OCI-LY7 (cell line): ENCODE measurements at regions of chr6 and their contacts with region 1.

Region 1: GRCh38 chr6:156699017-156699421 is 78.2 kb upstream of the ARID1B start:
- DNase-seq: no peak
- H3K4me3 ChIP-seq: peak overlapping the region; percentile 43
- H3K27ac ChIP-seq: peak overlapping the region; percentile 98
- H3K4me1 ChIP-seq: peaks cover 87% of the 10 kb centered on the region
- CTCF ChIP-seq: no peak

Region 2: GRCh38 chr6:155314092-155314772 is 1384.8 kb before region 1 on chr6 and contains the start of gene TFB1M:
- CTCF ChIA-PET with region 1: no interaction called
- POLR2A ChIA-PET with region 1: no interaction called
- intact Hi-C with region 1: loop called (anchors 10 kb)
- DNase-seq: peak; percentile 99
- H3K4me3 ChIP-seq: peak within 1 kb of the TSS; percentile 85
- H3K27ac ChIP-seq: peak within 1 kb of the TSS; percentile 89
- H3K4me1 ChIP-seq: peaks cover 28% of the 10 kb centered on the region
- CTCF ChIP-seq: no peak
- total RNA-seq, gene TFB1M: 33.0 and 34.8 TPM in 2 replicates

Region 3: DNA sequence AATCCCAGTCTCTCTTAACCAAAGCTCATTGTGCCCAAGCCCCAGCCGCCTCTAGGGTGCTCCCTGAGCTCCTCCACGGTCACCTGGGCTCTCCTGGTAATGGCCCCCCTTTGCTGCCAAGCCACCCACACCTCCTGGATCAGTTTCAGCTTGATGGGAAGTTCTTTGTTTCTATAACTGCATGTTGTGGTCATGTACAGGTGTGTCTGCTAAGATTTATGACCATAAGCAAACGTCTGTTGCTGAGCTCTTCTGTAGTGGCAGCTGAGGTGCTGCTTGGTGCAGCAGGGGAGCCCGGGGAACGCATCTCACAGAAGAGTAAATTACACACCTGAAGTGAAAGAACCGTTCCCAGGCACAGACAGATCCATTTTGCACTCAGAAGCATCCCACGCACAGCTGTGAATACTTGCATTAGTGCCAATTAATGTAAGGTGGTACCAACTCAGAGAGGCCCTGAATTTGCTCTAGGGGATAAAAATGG is 116.5 kb before region 1 on chr6:
- CTCF ChIA-PET with region 1: no interaction called
- POLR2A ChIA-PET with region 1: interaction called, 3 read pairs
- intact Hi-C with region 1: loop called (anchors 1 kb)
- DNase-seq: peak; percentile 89
- H3K4me3 ChIP-seq: peak overlapping the region; percentile 33
- H3K27ac ChIP-seq: peak overlapping the region; percentile 84
- H3K4me1 ChIP-seq: peaks cover 23% of the 10 kb centered on the region
- CTCF ChIP-seq: peak; percentile 59

Region 4: GRCh38 chr6:156686995-156687788 is 11.8 kb before region 1 on chr6:
- CTCF ChIA-PET with region 1: no interaction called
- POLR2A ChIA-PET with region 1: interaction called, 34 read pairs
- intact Hi-C with region 1: no loop called
- DNase-seq: peak; percentile 89
- H3K4me3 ChIP-seq: peak overlapping the region; percentile 73
- H3K27ac ChIP-seq: peak overlapping the region; percentile 92
- H3K4me1 ChIP-seq: peaks cover 57% of the 10 kb centered on the region
- CTCF ChIP-seq: no peak

Region 5: DNA sequence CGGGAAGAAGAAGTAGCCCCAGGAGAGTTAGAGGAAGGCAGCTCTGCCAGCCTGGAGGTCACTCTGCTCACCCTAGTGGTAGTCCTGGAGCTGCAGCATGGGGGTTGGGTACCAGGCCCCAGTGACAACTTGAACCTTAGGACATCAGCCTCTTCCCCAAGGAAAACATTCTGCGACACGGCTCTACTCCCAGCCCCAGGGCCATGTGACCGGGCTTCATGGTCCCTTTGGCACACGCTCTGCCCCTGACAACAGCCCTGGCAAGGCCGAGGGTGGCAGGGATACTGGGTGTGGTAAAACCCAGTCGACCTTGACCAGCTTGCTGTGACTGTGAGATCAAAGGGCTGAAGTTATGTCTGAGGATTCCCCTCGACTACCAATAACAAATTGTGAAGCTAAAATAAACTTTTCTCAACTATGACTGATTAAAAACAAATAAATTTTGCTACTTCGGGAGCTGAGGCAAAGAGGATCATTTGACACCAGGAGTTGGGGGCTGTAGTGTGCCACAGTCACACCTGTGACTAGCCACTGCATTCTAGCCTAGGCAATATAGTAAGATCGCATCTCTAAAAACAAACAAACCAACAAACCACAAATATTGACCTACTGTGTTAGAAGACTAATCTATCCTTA is 53.8 kb after region 1 on chr6:
- CTCF ChIA-PET with region 1: interaction called, 4 read pairs
- POLR2A ChIA-PET with region 1: interaction called, 74 read pairs
- intact Hi-C with region 1: loop called (anchors 1 kb)
- DNase-seq: peak; percentile 78
- H3K4me3 ChIP-seq: peak overlapping the region; percentile 43
- H3K27ac ChIP-seq: peak overlapping the region; percentile 77
- H3K4me1 ChIP-seq: peaks cover 68% of the 10 kb centered on the region
- CTCF ChIP-seq: peak; percentile 82